ENCODE measurements at regions of chr17 and their contacts with region 1.

Region 1: DNA sequence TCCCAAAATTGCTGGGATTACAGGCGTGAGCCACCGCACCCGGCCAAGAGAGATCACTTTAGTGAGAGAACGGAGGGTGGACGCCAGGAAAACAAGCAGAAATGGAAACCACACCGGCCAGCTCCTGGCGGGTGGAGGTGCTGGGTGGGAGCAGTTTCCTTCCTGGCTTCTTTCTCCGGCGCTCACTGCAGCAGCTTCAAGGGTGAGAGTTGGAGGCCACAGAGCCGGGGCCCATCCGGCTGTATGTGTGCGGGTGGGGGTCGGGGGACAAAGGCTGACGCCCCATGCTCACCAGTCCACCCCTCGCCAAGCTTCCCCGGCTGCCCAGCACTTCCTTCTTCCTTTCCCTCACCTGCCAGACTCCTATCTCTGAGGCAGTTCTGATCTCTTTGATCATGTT is 13.5 kb upstream of the BHLHA9 start:
- DNase-seq: no peak
- H3K4me3 ChIP-seq: no peak overlapping the region
- H3K27ac ChIP-seq: peak overlapping the region in 4 of 8 donors; percentile 40 to 51 (median 46)
- H3K4me1 ChIP-seq: peaks cover 9 to 63% (median 37%) of the 10 kb centered on the region in 6 donors
- H3K27me3 ChIP-seq: peaks cover 0 to 76% (median 7%) of the 10 kb centered on the region in 7 donors
- CTCF ChIP-seq: no peak
- POLR2A ChIP-seq: no peak

Region 2: DNA sequence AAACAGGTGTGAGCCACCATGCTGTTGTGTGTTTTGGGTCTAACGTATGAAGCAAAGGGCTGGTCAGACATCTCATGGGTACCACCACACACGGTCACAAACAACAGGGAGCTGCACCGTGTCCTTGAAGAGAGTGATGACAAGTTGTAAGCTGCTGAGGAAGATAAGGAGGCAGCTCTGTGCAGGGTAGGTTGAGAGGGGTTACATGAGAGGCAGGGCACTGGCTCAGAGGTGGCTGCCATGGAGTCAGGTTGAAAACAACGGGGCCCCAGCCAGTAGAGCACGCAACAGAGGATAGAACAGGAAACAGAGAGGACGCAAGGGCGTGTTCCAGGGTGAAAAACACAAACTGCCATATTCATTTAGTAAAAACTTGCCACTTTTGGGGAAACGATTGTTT is 75.0 kb after region 1 on chr17:
- intact Hi-C with region 1: loop called (anchors 5 kb)
- DNase-seq: no peak
- H3K4me3 ChIP-seq: no peak overlapping the region
- H3K27ac ChIP-seq: no peak overlapping the region
- H3K4me1 ChIP-seq: peaks cover 0 to 18% (median 11%) of the 10 kb centered on the region in 6 donors
- H3K27me3 ChIP-seq: peaks cover 0 to 11% (median 0%) of the 10 kb centered on the region in 7 donors
- CTCF ChIP-seq: no peak
- POLR2A ChIP-seq: no peak